Esophagus muscularis mucosa (tissue), 4 donors: ENCODE measurements at regions of chr19 and their contacts with region 1.

Region 1: GRCh38 chr19:10106100-10106936 is at the start of gene PPAN:
- DNase-seq: peak; percentile 98
- H3K4me3 ChIP-seq: peak within 1 kb of the TSS; percentile 66 to 94 (median 74)
- H3K27ac ChIP-seq: peak within 1 kb of the TSS; percentile 58 to 85 (median 73)
- H3K4me1 ChIP-seq: peaks cover 13 to 25% (median 21%) of the 10 kb centered on the region in 4 donors
- H3K27me3 ChIP-seq: no peaks in the 10 kb centered on the region
- CTCF ChIP-seq: peak in 1 of 3 experiments; percentile 46
- EP300 ChIP-seq: no peak
- POLR2A ChIP-seq: peak; percentile 57
- total RNA-seq, gene PPAN: 22.7 to 39.3 (median 29.1) TPM

Region 2: DNA sequence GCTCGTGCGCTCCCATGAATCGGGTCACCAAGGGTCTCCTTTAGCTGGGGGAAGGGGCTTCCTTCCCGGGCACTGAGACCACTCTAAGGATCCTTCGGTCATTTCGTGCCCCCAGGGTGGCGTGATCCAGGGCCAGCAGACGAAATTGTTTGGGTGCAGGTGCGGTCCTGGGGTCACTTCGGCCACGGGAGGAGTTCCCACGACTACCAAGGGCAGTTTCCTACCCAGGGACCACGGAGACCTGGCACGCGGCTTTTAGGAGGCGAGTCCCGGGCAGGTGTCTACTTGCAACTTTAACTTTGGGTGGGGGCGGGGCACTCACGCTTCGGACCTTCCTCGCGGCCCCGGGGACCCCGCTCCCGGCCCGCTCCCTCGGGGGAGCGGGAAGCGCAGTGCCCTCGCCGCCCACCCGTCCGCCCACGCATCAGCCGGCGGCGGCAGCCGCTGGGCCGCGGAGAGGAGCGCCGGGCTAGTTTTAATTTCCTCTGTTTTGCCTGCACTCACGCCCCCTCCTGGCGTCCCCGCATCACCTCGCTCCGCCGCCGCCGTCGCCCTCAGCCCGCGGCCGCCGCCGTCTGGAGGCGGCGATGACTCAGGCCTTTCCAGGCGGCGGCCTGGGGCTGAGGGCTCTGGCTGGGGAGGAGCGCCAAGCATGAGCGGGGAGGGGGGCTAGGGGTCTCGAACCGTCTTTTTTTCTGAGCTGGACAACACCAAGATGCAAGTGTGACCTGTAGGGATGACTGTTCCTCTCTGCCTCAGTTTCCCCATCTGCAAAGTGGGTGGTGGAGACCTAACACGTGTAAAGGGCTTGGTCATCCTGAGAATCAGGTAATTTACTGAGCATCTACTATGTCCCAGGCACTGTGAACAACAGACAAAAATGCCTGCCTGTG is 191.8 kb before region 1 on chr19:
- intact Hi-C with region 1: no loop called
- DNase-seq: no peak
- H3K4me3 ChIP-seq: peak overlapping the region; percentile 50 to 63 (median 54)
- H3K27ac ChIP-seq: no peak overlapping the region
- H3K4me1 ChIP-seq: peaks cover 17 to 25% (median 24%) of the 10 kb centered on the region in 4 donors
- H3K27me3 ChIP-seq: peaks cover 0 to 94% (median 30%) of the 10 kb centered on the region in 4 donors
- CTCF ChIP-seq: peak; percentile 30 to 40 (median 37)
- EP300 ChIP-seq: no peak
- POLR2A ChIP-seq: no peak

Region 3: GRCh38 chr19:10251792-10252694 is 145.7 kb after region 1 on chr19 and contains the start of gene MRPL4:
- intact Hi-C with region 1: loop called (anchors 10 kb)
- DNase-seq: peak; percentile 99
- H3K4me3 ChIP-seq: peak within 1 kb of the TSS; percentile 67 to 93 (median 87)
- H3K27ac ChIP-seq: peak within 1 kb of the TSS; percentile 80 to 89 (median 84)
- H3K4me1 ChIP-seq: peaks cover 20 to 39% (median 36%) of the 10 kb centered on the region in 4 donors
- H3K27me3 ChIP-seq: no peaks in the 10 kb centered on the region
- CTCF ChIP-seq: no peak
- EP300 ChIP-seq: no peak
- POLR2A ChIP-seq: peak; percentile 53
- total RNA-seq, gene MRPL4: 39.9 to 78.0 (median 61.7) TPM